ENCODE measurements at regions of chr1 and their contacts with region 1.

Region 1: DNA sequence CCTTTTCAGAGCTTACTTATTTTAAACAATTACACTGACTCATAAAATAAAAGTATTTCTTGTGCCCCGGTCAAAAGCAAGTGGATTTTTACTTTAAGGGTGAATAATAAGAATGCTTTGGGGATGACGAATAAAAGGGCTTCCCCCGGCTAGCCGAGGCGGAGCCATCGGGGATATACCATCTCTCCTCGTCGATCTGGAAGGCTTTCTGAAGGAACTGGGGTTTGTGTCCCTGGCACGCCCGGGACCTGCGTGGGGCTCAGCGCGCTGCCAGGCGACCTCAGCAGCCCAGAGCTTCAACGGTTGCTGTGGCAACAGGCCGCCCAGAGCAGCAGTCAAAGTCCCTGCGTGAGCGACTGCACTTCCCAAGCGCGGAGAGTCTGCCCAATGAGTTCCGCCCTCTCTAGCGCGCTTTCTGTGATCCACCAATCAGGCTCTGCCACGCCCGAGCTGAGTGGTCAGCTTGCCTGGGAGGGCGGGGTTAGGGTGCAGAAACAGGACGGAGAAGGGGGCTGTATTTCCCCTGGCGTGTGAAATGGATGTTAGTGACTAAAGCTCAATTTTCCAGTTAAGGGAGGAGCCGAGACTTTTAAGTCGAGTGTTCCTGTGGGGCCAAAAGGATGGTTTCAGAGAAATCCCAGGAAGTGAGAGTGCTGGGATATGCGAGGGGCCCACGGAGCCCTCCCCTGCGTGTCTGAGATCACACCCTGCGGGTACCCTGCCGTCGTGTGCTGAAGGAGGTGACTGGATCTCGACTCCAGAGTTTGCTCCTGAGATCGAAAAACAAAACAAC is 33.0 kb upstream of the MGST3 start:
- DNase-seq: peak; percentile 86
- H3K4me3 ChIP-seq: peak overlapping the region; percentile 63
- H3K27me3 ChIP-seq: peaks cover 10% of the 10 kb centered on the region
- CTCF ChIP-seq: no peak

Region 2: DNA sequence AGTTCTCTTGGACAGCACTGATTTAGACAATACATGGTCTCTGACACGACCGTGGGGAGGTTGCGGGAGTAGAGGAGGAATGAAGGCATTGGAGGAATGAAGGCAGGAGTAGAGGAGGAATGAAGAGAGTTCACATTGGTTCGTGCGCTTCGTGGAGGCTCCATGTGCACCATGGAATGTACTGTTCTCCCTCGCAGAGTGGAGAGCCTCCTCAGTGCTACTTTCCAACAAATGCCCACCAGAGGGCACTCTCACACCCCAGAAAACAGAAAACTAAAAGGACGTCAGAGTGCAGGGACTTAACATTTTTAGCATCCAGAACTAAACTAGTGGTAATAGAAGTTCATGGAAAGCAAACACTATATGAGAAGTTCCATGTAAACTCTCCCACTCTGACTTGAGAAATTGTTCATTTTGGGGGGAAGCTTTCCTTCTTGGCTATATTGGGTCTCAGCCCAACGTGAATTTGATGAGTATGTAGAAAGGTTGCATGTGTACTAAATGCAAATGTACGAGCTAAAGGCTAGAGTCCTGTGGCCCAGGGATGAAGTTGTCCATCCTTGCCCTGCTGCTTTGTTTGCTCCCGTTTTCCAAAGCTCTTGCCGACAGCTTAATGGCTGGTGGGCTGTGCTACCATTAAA is 453.2 kb before region 1 on chr1:
- CTCF ChIA-PET with region 1: interaction called, 10 read pairs
- POLR2A ChIA-PET with region 1: no interaction called
- DNase-seq: peak; percentile 4
- H3K4me3 ChIP-seq: no peak overlapping the region
- H3K27me3 ChIP-seq: no peaks in the 10 kb centered on the region
- CTCF ChIP-seq: peak; percentile 87

Region 3: GRCh38 chr1:165265196-165265838 is 332.8 kb before region 1 on chr1:
- CTCF ChIA-PET with region 1: no interaction called
- POLR2A ChIA-PET with region 1: no interaction called
- DNase-seq: no peak
- H3K4me3 ChIP-seq: no peak overlapping the region
- H3K27me3 ChIP-seq: no peaks in the 10 kb centered on the region
- CTCF ChIP-seq: no peak

Region 4: GRCh38 chr1:165383067-165383466 is 215.0 kb before region 1 on chr1:
- CTCF ChIA-PET with region 1: interaction called, 12 read pairs
- POLR2A ChIA-PET with region 1: no interaction called
- DNase-seq: peak; percentile 56
- H3K4me3 ChIP-seq: no peak overlapping the region
- H3K27me3 ChIP-seq: peaks cover 8% of the 10 kb centered on the region
- CTCF ChIP-seq: no peak

Region 5: GRCh38 chr1:165637427-165637826 is 39.3 kb after region 1 on chr1:
- CTCF ChIA-PET with region 1: no interaction called
- POLR2A ChIA-PET with region 1: no interaction called
- DNase-seq: peak; percentile 65
- H3K4me3 ChIP-seq: no peak overlapping the region
- H3K27me3 ChIP-seq: no peaks in the 10 kb centered on the region
- CTCF ChIP-seq: no peak

Region 6: GRCh38 chr1:165697881-165698760 is 100.0 kb after region 1 on chr1 and contains the start of gene ALDH9A1:
- CTCF ChIA-PET with region 1: interaction called, 17 read pairs
- POLR2A ChIA-PET with region 1: no interaction called
- DNase-seq: peak; percentile 36
- H3K4me3 ChIP-seq: peak within 1 kb of the TSS; percentile 63
- H3K27me3 ChIP-seq: peaks cover 3% of the 10 kb centered on the region; the same call in 1 of the 2 replicates
- CTCF ChIP-seq: peak; percentile 44
- polyA plus RNA-seq, gene ALDH9A1: 43.8 and 71.7 TPM in 2 replicates

Region 7: DNA sequence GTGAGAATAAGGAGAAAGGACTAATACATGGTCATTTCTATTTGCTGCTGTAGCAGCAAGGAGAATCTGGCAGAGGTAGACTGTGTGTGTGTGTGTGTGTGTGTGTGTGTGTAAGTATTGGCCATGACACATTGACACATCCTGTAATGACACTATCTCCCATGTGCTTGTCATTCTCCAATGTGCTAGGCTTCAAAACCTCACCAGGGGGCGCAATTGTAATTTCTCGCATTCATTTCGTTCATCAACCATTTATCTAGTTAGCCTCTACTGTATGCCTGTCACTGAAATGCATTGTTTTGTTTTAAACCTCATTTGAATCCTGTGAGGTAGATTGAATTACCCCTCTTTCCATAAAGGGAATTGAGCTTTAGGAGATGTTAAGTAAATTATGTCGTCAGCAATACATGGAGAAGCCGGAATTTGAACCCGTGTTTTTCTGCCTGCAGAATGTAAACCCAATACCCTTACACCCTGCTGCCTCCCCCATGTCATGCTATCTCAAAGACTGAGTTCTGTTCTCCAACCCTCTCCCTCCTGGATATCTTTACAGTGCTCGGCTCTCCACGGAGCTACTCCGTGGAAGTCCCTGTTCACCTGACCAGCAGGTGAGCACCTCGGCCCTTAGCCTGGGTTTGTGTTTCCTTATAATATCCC is 330.1 kb after region 1 on chr1:
- CTCF ChIA-PET with region 1: interaction called, 19 read pairs
- POLR2A ChIA-PET with region 1: no interaction called
- DNase-seq: no peak
- H3K4me3 ChIP-seq: no peak overlapping the region
- H3K27me3 ChIP-seq: no peaks in the 10 kb centered on the region
- CTCF ChIP-seq: peak; percentile 76